ENCODE measurements at regions of chr3 and their contacts with region 1.

Region 1: GRCh38 chr3:32374788-32375595 is 16.7 kb upstream of the CMTM7 start:
- DNase-seq: peak; percentile 86
- H3K4me3 Mint-ChIP-seq: no peak overlapping the region
- H3K27ac Mint-ChIP-seq: no peak overlapping the region
- H3K4me1 Mint-ChIP-seq: peaks cover 32% of the 10 kb centered on the region
- H3K27me3 Mint-ChIP-seq: no peaks in the 10 kb centered on the region

Region 2: GRCh38 chr3:32391643-32392535 is 16.9 kb after region 1 on chr3 and contains the start of gene CMTM7:
- CTCF ChIA-PET with region 1: interaction called, 11 read pairs
- POLR2A ChIA-PET with region 1: no interaction called
- DNase-seq: peak; percentile 75
- H3K4me3 Mint-ChIP-seq: peak within 1 kb of the TSS; percentile 94
- H3K27ac Mint-ChIP-seq: peak within 1 kb of the TSS; percentile 95
- H3K4me1 Mint-ChIP-seq: peaks cover 61% of the 10 kb centered on the region
- H3K27me3 Mint-ChIP-seq: no peaks in the 10 kb centered on the region
- total RNA-seq, gene CMTM7: 45.9 to 62.6 TPM

Region 3: DNA sequence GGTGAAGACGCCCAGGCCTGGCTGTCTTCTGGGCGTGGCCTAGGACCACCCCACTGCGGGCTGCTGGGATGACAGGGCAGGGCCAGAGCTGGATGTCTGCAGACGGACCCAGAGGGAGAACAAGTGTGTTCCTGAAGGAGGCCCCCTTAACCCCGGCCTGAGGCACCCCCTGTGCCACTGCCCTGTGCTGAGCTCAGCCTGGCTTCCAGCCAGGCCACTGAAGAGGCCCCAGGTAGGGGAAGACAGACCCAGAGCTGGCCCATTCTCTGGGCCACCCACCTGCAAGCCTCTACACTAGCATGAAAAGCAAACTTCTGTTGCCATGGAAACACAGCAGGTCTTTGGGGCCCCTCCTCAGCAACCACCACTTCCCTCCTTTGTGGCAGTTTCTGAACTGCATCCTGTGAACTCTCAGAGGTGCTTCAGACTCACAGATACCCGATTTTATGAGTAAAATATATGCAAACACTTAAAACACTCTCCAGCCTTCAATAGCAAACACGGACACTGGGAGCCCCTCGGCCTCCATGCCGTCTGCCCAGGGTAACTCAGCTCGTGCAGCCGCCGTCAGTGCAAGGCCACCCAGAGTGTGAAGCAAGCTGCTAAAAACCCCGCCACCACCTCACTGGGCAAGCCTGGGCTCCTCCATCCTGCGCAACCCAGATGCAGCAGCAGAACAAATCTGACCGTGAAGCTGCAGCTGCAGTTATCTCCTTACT is 85.2 kb after region 1 on chr3:
- CTCF ChIA-PET with region 1: interaction called, 10 read pairs
- POLR2A ChIA-PET with region 1: no interaction called
- DNase-seq: peak; percentile 93
- H3K4me3 Mint-ChIP-seq: peak overlapping the region; percentile 33
- H3K27ac Mint-ChIP-seq: no peak overlapping the region
- H3K4me1 Mint-ChIP-seq: peaks cover 31% of the 10 kb centered on the region
- H3K27me3 Mint-ChIP-seq: no peaks in the 10 kb centered on the region

Region 4: GRCh38 chr3:32467333-32468070 is 92.5 kb after region 1 on chr3:
- CTCF ChIA-PET with region 1: interaction called, 32 read pairs
- POLR2A ChIA-PET with region 1: no interaction called
- DNase-seq: peak; percentile 70
- H3K4me3 Mint-ChIP-seq: no peak overlapping the region
- H3K27ac Mint-ChIP-seq: no peak overlapping the region
- H3K4me1 Mint-ChIP-seq: peaks cover 47% of the 10 kb centered on the region
- H3K27me3 Mint-ChIP-seq: no peaks in the 10 kb centered on the region

Measured in activated CD4-positive, alpha-beta T cell treated with anti-CD3 and anti-CD28 coated beads, Interleukin-2, amount 10 ng/mL, durations not matched to agents 7 days and 5 days (primary cell).